ENCODE measurements at regions of chr12 and their contacts with region 1.

Region 1: GRCh38 chr12:52879394-52880351 is 25.2 kb downstream of the KRT8 start:
- DNase-seq: peak; percentile 84
- H3K4me3 Mint-ChIP-seq: peak overlapping the region; percentile 54
- H3K27ac Mint-ChIP-seq: no peak overlapping the region
- H3K4me1 Mint-ChIP-seq: peaks cover 10% of the 10 kb centered on the region
- H3K27me3 Mint-ChIP-seq: peaks cover 30% of the 10 kb centered on the region

Region 2: DNA sequence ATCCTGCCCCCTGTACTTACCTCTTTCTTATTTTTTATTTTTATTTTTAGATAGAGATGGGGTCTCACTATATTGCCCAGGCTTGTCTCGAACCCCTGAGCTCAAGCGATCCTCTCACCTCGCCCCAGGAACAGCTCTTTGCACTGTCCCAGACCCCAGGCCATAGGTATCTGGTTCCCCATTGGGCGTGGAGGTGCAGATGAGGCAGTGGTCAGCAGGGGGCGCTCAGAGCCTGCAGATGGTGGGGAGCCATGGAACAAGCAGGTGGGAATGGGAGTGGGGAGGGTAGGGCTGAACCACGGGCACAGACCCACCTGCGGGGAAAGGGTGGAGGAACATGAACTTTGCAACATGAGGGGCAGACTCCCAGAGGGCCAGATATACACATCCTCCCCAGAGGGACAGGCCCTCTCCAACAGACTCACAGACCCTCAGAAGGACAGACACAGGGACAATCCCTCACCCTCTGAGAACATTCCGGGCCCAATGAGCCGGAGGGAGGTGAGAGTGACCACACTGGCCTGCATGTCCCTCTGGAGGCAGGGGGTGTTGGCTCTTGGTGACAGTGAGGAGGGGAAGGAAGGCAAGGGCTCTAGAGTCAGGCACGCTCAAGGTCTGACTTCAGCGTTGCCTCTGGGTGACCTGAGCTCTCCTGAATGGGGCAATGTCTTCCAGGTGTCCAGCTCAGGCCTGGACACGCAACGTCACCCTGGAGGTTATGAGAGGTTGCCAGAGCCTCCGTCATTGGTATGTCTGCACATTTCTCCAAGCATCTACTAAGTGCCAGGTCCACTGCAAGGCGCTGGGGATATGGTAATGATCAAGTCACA is 722.7 kb before region 1 on chr12:
- CTCF ChIA-PET with region 1: interaction called, 17 read pairs
- DNase-seq: peak; percentile 86
- H3K4me3 Mint-ChIP-seq: no peak overlapping the region
- H3K27ac Mint-ChIP-seq: no peak overlapping the region
- H3K4me1 Mint-ChIP-seq: peaks cover 74% of the 10 kb centered on the region
- H3K27me3 Mint-ChIP-seq: no peaks in the 10 kb centered on the region

Region 3: DNA sequence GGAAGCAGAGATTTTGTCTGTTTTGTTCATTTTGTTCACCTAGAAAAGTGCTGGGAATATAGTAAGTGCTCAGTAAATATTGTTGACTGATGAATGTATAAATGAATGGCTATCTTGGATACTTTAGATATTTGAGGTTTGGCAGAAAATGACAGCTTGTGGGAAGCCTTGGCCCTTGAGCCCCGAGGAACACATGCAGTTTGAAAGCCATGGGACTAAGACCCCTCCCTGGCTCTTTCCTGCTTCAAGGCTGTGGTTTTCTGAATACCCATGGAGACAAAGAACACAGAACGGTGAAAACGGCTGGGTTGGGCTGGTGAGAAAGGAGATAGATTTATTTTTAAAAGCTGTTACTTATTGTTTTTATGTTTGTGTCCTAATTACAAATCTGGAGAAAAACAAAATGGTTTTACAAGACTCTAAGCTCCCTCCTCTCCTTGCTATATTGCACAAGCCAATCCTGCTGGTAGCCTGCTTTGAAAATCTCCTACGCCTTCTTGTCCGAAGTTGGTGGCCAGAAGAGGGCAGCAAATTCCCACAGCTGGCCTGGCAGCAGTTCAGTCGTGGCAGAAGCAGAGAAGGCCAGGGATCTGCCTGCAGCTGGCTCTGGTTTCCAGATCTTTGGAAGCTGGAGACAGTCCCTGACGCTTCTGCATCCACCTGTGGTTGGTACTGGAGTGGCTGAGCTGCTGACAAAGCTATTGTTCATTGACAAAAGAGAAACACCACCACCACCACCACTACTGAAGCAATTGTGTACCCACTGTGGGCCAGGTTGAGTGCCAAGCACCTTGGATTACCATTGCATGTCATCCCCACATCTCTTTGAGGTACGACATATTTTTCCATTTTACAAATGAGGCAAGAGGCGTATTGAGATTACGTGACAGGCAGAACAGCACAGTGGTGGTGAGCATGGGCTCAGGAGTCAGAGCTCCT is 507.2 kb before region 1 on chr12:
- CTCF ChIA-PET with region 1: interaction called, 42 read pairs
- DNase-seq: peak; percentile 77
- H3K4me3 Mint-ChIP-seq: no peak overlapping the region
- H3K27ac Mint-ChIP-seq: no peak overlapping the region
- H3K4me1 Mint-ChIP-seq: no peaks in the 10 kb centered on the region
- H3K27me3 Mint-ChIP-seq: peaks cover 56% of the 10 kb centered on the region

Region 4: GRCh38 chr12:52582971-52583456 is 296.7 kb before region 1 on chr12:
- CTCF ChIA-PET with region 1: interaction called, 162 read pairs
- DNase-seq: peak; percentile 81
- H3K4me3 Mint-ChIP-seq: no peak overlapping the region
- H3K27ac Mint-ChIP-seq: no peak overlapping the region
- H3K4me1 Mint-ChIP-seq: peaks cover 42% of the 10 kb centered on the region
- H3K27me3 Mint-ChIP-seq: peaks cover 34% of the 10 kb centered on the region

Region 5: DNA sequence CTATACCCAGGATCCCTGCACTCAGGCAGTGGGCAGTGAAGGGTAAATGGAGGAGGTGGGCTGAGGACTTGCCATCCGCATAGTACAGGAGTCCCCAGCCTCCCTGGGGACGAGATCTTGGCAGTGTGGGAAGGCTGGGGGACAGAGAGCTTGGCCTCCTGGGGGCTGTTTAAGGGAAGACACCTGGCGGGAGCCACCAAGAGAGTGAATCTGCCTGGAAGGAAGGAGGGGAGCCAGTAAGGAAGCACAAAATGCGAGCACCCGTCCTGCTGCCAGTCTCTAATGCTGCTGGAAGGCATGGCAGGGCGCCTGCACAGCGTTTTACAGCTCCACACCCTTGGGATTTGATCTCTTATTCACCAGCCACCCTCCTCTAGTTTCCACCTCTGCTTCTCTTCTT is 220.3 kb before region 1 on chr12:
- CTCF ChIA-PET with region 1: no interaction called
- DNase-seq: no peak
- H3K4me3 Mint-ChIP-seq: no peak overlapping the region
- H3K27ac Mint-ChIP-seq: no peak overlapping the region
- H3K4me1 Mint-ChIP-seq: peaks cover 9% of the 10 kb centered on the region
- H3K27me3 Mint-ChIP-seq: peaks cover 54% of the 10 kb centered on the region

Region 6: DNA sequence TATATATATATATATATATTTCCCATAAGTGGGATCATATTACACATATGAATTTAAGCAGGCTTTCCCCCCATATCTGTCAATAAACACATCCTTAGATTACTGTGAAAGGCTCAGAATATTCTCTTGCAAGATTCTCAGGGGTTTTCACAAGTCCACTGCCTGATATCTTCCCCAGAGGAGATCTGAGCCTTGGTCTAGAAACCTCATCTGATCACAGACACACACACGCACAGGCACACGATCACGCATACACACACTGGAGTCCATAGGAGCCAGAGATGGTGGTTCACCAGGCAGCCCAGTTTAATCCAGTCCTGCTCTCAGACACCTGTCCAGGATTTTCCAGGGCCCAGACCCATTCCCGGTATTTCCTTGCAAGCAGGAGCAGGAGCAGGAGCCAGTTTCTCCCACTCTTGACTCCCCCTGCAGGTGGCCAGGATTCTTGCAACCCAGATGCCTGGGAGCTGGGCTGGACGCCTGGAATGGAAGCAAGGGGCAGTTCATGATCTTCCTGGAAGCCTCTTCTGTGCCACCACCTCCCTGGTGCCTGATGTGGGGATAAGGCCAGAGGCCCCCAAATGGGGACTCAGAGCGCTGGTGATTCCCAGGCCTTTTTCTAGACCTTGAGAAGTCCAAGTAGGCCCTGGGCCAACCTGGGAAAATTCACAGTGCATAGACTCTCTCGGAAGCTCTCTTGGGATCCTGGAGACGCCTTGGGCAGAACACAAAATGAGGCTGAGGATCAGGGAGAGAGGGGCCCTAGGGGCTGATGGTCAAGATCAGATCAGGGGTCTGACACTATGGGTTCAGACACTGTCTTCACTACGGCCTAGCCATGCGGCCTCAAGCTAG is 14.4 kb before region 1 on chr12:
- CTCF ChIA-PET with region 1: interaction called, 51 read pairs
- DNase-seq: peak; percentile 40
- H3K4me3 Mint-ChIP-seq: no peak overlapping the region
- H3K27ac Mint-ChIP-seq: no peak overlapping the region
- H3K4me1 Mint-ChIP-seq: peaks cover 18% of the 10 kb centered on the region
- H3K27me3 Mint-ChIP-seq: peaks cover 9% of the 10 kb centered on the region

Region 7: DNA sequence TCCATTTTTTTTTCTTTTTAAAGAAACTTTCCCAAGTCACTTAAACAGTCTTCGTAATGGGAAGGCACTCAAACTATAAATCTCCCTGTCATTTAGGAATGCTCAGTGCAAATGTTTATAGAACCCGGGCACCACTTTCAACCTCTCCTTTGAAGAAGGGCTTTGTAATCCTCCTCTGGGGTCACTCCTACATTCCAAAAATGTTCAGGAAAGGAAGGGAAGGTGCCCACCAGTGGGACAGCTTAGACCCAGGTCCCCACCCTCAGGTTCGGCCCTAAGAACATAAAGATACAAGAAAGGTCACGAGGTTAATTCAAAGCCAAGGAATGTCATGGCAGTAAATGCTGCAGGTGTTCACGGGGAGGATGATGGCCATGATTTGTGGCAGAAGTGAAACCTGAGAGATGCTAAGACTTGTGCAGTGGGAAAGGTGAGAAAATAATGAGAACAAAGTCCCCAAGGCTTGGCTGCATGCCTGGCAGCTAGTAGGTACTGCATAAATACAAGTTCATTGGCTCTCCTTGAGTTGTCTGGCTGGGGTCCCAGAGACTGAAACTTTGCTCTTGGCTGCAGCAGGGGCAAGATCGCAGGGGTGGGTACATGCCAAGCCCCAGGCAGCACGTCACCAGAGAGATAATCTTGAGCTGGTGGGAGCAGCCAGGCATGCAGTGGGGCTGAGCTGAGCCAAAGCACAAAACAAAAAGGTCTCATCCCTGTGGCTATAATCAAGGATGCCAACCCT is 90.3 kb after region 1 on chr12:
- CTCF ChIA-PET with region 1: interaction called, 12 read pairs
- DNase-seq: no peak
- H3K4me3 Mint-ChIP-seq: no peak overlapping the region
- H3K27ac Mint-ChIP-seq: no peak overlapping the region
- H3K4me1 Mint-ChIP-seq: no peaks in the 10 kb centered on the region
- H3K27me3 Mint-ChIP-seq: peaks cover 44% of the 10 kb centered on the region

Measured in activated naive CD4-positive, alpha-beta T cell treated with anti-CD3 and anti-CD28 coated beads, Interleukin-2, amount 10 ng/mL, durations not matched to agents 7 days and 5 days (primary cell).